Heart right ventricle (tissue), 16 donors: ENCODE measurements at regions of chr17 and their contacts with region 1.

Region 1: DNA sequence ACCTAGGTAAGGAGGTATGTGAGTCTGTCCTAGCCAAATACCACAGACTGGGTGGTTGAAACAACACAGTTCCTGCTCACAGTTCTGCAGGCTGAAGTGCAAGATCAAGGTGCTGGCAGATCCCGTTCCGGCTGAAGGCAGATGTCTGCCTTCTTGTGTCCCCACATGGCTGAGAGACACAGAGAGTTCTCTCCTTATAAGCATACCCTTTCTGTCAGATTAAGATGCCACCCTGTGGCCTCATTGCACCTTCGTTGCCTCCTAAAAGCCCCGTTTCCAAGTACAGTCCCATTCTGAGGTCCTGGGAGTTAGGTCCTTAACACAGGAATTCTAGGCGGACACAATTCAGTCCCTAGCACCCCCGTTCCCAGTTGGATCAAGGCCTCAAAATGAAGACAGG is 9.1 kb upstream of the TMEM11 start:
- DNase-seq: no peak
- ATAC-seq: no peak
- H3K4me3 ChIP-seq: no peak overlapping the region
- H3K27ac ChIP-seq: no peak overlapping the region
- H3K4me1 ChIP-seq: peaks cover 0 to 6% (median 0%) of the 10 kb centered on the region in 9 donors
- H3K27me3 ChIP-seq: no peaks in the 10 kb centered on the region
- CTCF ChIP-seq: no peak

Region 2: DNA sequence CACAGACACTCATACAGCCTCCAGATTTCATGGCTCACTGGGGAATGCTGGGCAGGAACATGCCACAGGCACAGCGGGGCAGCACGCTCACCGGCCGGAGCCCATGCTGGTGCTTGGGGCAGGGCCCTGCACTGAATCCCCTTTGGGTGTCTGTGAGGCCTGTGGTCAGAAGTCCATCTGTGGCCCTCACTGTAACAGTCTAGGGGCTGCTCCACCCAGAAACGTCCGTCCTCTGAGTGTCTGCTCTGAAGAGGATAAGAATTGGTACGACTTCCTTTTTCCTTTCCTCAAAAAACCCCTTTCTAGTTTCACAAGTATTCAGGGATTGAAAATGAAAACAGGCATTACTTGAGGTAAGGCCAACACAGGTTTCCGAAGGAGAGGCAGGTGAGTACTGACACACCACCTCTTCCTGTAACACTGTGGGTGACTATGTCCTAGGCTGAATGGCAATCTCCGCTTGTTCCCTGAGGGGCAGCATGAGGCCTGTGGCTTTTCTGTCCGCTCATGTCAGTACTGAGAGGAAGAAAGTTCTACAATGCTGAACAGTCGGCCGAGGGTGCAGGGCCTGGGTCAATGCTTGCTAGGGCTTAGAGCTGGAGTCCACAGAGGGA is 51.7 kb before region 1 on chr17:
- intact Hi-C with region 1: loop called in 2 of 10 experiments (anchors 5 to 10 kb)
- DNase-seq: no peak
- ATAC-seq: no peak
- H3K4me3 ChIP-seq: no peak overlapping the region
- H3K27ac ChIP-seq: peak overlapping the region in 6 of 10 donors; percentile 0 to 60 (median 29)
- H3K4me1 ChIP-seq: peaks cover 4 to 80% (median 56%) of the 10 kb centered on the region in 9 donors
- H3K27me3 ChIP-seq: no peaks in the 10 kb centered on the region
- CTCF ChIP-seq: no peak

Region 3: DNA sequence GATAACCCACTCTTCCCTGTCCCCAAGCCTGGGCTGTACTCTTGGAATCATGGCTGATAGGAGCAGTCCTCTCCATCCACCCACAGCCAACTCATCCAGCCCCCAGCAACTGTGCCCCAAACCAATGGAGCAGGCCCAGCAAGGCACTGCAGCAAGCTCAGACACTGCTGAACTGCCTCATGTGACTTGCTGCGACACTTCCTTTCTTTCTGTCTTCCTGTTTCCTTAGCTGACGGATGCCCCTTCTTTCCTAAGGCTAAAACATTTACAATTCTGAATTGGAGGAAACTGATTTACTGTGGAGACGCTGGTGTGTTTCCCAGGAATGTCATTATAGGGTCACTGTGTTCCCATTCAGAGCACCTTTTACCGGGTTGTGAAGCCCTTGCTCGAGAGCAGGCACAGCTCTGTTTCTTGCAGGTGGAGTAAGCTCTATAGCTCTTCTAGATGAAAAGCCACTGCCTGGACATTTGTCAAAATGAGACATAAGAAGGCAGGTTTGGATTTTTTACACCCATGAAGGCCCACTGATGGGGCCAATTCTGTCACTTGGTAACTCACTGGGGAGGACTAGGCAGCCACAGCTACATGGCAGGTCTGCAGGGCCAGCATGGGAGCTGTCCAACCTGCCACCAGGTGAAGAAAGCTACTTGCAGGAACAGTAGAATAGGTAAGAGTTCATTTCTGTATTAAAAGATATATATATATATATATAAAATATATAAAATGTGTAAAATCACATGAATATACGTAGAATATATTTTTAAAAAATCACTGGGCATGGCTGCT is 36.5 kb before region 1 on chr17:
- intact Hi-C with region 1: no loop called
- DNase-seq: peak in 1 of 2 donors; percentile 29
- ATAC-seq: peak in 7 of 8 donors; percentile 36 to 87 (median 74)
- H3K4me3 ChIP-seq: no peak overlapping the region
- H3K27ac ChIP-seq: peak overlapping the region; percentile 20 to 85 (median 63)
- H3K4me1 ChIP-seq: peaks cover 0 to 54% (median 22%) of the 10 kb centered on the region in 9 donors
- H3K27me3 ChIP-seq: no peaks in the 10 kb centered on the region
- CTCF ChIP-seq: no peak

Region 4: GRCh38 chr17:21253646-21254441 is 30.8 kb after region 1 on chr17:
- intact Hi-C with region 1: no loop called
- DNase-seq: no peak
- ATAC-seq: peak in 4 of 8 donors; percentile 2 to 13 (median 8)
- H3K4me3 ChIP-seq: peak overlapping the region; percentile 49 to 82 (median 64)
- H3K27ac ChIP-seq: peak overlapping the region; percentile 62 to 88 (median 78)
- H3K4me1 ChIP-seq: peaks cover 0 to 46% (median 30%) of the 10 kb centered on the region in 9 donors
- H3K27me3 ChIP-seq: no peaks in the 10 kb centered on the region
- CTCF ChIP-seq: no peak